Sigmoid colon (tissue), 7 donors: ENCODE measurements at regions of chr7 and their contacts with region 1.

Region 1: DNA sequence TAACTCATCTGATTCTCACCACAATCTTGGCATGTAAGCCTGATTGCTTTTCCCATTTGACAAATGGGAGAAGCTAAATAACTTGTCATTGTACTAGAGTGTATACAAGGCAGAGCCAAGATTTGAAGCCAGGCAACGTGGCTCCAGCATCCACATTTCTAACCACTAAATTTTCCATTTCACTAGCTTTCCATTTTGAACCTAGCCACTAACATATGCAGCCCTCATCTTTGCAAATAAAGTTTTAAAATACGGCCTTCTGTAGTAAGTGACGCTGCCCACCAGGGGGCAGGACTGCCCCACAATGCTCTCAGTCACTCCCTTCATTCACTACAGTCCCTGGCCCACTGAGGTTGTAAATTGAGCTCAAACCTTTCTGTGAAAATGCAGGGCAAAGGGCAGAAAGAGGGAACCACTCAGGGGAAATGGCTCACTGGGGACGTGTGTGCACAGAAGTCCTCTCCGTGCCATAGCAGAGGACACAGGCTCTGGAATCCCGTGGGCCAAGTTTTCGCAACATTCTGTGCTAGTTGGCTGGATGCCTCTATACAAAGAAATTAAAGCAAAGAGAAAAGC is 315.7 kb downstream of the TNS3 start:
- DNase-seq: peak; percentile 76
- H3K4me3 ChIP-seq: no peak overlapping the region
- H3K27ac ChIP-seq: peak overlapping the region in 2 of 4 donors; percentile 16 to 35
- H3K4me1 ChIP-seq: peaks cover 0 to 10% (median 0%) of the 10 kb centered on the region in 4 donors
- H3K27me3 ChIP-seq: no peaks in the 10 kb centered on the region
- CTCF ChIP-seq: peak; percentile 85 to 96 (median 92)
- EP300 ChIP-seq: no peak
- POLR2A ChIP-seq: no peak

Region 2: GRCh38 chr7:46811529-46811928 is 454.7 kb before region 1 on chr7:
- intact Hi-C with region 1: no loop called
- DNase-seq: peak; percentile 68
- H3K4me3 ChIP-seq: no peak overlapping the region
- H3K27ac ChIP-seq: peak overlapping the region in 1 of 4 donors; percentile 59
- H3K4me1 ChIP-seq: peaks cover 0 to 19% (median 14%) of the 10 kb centered on the region in 4 donors
- H3K27me3 ChIP-seq: no peaks in the 10 kb centered on the region
- CTCF ChIP-seq: no peak
- EP300 ChIP-seq: no peak
- POLR2A ChIP-seq: no peak

Region 3: GRCh38 chr7:47405921-47406792 is 139.9 kb after region 1 on chr7:
- intact Hi-C with region 1: loop called (anchors 10 kb)
- DNase-seq: peak; percentile 88
- H3K4me3 ChIP-seq: peak overlapping the region in 1 of 4 donors; percentile 1
- H3K27ac ChIP-seq: peak overlapping the region; percentile 60 to 87 (median 80)
- H3K4me1 ChIP-seq: peaks cover 0 to 65% (median 55%) of the 10 kb centered on the region in 4 donors
- H3K27me3 ChIP-seq: no peaks in the 10 kb centered on the region
- CTCF ChIP-seq: no peak
- EP300 ChIP-seq: peak in 3 of 4 donors; percentile 2 to 9 (median 3)
- POLR2A ChIP-seq: no peak

Region 4: DNA sequence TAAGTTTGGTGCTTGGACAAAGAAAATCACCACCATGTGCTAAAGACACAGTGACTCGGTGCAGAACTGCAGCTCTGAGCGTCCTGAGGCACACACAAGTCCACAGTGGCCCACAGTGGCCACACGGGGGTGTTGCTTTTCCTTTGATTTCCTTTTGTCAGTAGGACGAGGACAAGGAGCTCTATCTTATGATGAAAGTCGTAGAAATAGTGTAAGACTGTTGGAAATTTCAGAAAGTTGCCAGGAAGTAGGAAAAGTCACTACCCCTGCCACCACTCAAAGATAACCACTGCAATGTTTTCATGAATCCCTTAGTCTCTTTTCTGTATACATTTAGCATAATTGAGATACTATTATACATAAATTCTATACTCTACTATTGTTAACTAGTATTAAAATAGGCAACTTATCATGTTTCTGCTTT is 169.7 kb after region 1 on chr7:
- intact Hi-C with region 1: loop called (anchors 1 kb)
- DNase-seq: peak; percentile 87
- H3K4me3 ChIP-seq: no peak overlapping the region
- H3K27ac ChIP-seq: no peak overlapping the region
- H3K4me1 ChIP-seq: peaks cover 0 to 8% (median 5%) of the 10 kb centered on the region in 4 donors
- H3K27me3 ChIP-seq: no peaks in the 10 kb centered on the region
- CTCF ChIP-seq: peak; percentile 57 to 85 (median 80)
- EP300 ChIP-seq: no peak
- POLR2A ChIP-seq: no peak

Region 5: DNA sequence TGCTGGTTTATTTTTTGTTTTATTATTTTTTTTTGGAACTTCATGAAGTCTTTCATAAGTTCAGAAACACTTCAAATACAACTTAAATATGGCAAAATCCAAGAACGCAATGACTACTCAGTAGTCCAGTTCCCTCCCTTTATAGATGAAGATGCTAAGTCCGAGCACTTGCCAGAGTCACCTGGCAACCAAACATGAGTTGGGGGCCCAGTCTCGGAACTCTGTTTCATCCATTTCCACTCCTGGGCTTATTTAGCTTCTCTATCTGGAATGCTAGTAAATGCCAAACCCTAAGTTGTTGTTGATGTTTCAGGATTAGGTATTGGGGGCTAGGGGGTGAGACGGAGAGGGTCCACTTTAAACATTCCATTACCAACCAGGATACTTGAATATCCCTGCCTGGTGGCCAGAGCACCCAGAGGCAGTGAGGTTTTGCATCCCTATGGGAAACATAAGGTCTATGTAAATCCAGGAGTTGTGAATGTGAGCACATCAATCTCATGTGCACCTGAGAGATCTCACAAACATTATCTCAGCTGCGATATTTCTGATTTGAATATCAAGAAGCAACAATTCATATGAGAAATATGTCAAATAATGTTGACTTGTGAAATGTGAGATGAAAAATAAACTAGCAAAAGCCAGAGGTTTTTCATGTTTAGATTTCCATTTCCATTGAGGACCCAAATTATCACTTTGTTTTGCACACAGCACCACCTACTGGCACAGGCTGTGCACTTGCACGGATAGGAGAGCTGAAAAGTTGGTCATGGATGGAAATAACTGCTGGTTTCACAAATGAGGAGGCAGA is 552.8 kb after region 1 on chr7:
- intact Hi-C with region 1: loop called (anchors 1 kb)
- DNase-seq: peak; percentile 82
- H3K4me3 ChIP-seq: no peak overlapping the region
- H3K27ac ChIP-seq: no peak overlapping the region
- H3K4me1 ChIP-seq: peaks cover 0 to 28% (median 14%) of the 10 kb centered on the region in 4 donors
- H3K27me3 ChIP-seq: no peaks in the 10 kb centered on the region
- CTCF ChIP-seq: peak; percentile 79 to 89 (median 88)
- EP300 ChIP-seq: no peak
- POLR2A ChIP-seq: no peak